Activated T-helper 1 cell treated with anti-CD3 and anti-CD28 coated beads, Interleukin-12 subunit alpha, Interleukin-12 subunit beta, Interleukin-2, Interleukin-4 antibody, amounts not matched to agents 30 ng/mL and 10 ng/mL and 1 ng/mL, durations not matched to agents 14 hours and 24 hours and 36 hours (primary cell): ENCODE measurements at regions of chr5 and their contacts with region 1.

Region 1: DNA sequence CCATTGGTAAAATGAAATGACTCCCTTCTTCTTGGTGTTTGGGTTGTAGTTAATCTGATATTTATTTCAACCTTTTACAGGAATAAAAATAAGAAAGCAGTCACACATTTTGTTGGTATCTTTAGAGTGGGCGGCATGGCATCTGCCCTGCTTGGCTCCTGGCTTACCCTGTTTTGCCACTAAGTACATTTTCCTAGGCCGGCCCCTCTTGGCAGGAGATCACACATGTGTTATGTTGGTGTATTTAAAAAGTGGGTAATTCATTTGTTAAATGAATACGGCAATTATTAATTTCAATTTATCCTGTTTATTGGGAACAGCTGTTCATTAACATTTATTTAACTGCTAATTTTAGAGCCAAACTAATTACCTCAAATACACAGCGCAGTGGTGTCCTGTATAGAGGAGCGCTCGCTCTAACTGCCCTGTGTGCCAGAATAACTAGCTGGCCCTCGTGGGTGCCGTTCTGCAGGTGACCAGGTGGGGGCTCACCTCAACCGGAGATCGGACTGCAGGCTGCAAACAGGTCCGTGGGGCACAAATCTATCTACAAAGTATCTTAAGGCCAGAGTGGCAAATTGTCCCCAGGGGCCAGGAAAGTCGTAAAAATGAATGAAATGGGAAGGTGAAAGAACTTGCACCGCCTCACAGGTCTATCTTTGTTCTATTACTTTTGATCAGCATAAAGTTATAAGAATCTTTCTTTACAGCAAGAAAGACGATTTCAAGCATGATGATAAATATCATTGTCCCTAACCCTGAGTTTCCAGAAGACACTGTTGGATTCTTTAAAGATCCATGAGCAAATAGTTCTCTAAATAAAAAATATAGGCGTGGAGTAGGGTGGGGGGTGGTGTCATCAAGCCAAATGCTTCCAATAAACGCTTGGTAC is 26.2 kb upstream of the GPR151 start:
- DNase-seq: peak; percentile 38
- H3K4me3 Mint-ChIP-seq: no peak overlapping the region
- H3K27ac Mint-ChIP-seq: no peak overlapping the region
- H3K4me1 Mint-ChIP-seq: no peaks in the 10 kb centered on the region
- H3K27me3 Mint-ChIP-seq: peaks cover 7% of the 10 kb centered on the region

Region 2: DNA sequence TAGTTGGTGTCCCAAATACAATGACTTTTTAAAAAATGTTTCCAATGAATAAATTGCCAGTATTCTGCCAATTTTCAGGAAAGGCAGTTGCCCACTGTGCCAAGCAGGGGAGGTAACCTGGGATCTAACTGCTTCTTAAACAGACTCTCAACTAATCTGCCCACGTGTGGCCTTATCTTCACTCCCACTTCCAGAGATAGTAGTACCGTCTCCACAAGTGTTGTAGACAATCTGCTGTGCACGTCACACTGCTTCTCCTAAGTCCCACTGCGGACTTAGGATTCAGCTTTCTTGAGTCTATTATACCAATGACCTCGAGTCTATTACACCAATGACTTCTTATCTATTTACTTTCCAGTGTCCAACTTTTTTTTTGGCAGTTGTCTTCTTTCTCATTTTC is 182.4 kb before region 1 on chr5:
- intact Hi-C with region 1: no loop called
- DNase-seq: no peak
- H3K4me3 Mint-ChIP-seq: no peak overlapping the region
- H3K27ac Mint-ChIP-seq: no peak overlapping the region
- H3K4me1 Mint-ChIP-seq: no peaks in the 10 kb centered on the region
- H3K27me3 Mint-ChIP-seq: peaks cover 11% of the 10 kb centered on the region

Region 3: DNA sequence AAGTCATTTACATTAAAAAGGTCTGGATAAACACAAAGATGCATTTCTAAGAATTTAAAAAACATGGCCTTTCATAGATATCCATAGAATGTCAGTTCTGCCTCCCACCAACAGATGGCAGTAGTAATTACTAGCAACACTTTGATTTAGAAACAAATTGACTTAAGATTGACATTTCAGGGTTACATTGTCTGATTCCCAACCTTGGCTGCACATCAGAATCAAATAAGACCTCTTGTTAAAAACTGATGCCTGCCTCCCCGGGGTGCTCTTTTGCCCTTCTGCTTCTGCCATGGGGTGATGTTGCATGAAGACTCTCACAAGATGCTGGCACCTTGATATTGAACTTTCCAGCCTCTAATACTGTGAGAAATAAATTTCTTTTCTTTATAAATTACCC is 120.0 kb after region 1 on chr5:
- intact Hi-C with region 1: loop called (anchors 1 kb)
- DNase-seq: no peak
- H3K4me3 Mint-ChIP-seq: no peak overlapping the region
- H3K27ac Mint-ChIP-seq: no peak overlapping the region
- H3K4me1 Mint-ChIP-seq: no peaks in the 10 kb centered on the region
- H3K27me3 Mint-ChIP-seq: no peaks in the 10 kb centered on the region